CD8-positive, alpha-beta T cell (primary cell): ENCODE measurements at regions of chr14 and their contacts with region 1.

Region 1: DNA sequence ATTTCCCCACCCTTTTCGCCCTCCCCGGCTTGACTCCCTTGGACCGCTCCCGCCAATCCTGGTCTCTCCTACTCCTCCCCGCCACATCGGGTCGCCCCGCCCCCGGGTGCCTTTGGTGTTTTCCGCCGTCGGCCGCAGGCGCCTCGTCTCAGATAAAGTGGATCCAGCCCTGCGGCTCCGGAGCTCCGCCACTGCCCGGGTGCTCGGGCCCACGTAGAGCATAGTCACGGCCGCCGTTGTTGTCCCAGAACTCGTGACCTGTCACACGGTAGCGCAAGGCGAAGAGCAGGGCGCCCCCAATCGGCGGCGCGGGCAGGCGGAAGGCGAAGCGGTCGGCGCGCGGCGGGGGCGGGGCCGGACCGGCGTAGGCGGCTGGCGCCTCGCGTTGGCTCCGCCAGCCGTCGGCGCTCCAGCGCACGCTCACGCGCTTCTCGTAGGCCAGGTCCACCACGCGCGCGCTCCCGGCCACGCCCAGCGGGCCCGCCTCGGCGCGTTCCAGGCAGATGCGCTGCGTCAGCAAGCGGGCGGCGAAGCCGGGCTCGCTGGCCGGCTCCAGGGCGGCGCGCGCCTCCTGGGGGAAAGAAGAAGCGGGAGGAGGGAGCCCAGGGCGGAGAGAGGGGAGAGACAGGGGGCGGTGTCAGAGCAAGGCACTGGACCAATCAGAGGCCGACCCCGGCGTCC is 1.2 kb downstream of the PPP1R3E start:
- DNase-seq: peak; percentile 93 to 99 (median 97)
- ATAC-seq: peak; percentile 74
- H3K4me3 ChIP-seq: peak overlapping the region; percentile 77 to 97
- H3K4me3 Mint-ChIP-seq: peak overlapping the region; percentile 97
- H3K27ac ChIP-seq: peak overlapping the region; percentile 97
- H3K27ac Mint-ChIP-seq: peak overlapping the region; percentile 98
- H3K4me1 ChIP-seq: peaks cover 19% of the 10 kb centered on the region
- H3K4me1 Mint-ChIP-seq: peaks cover 27% of the 10 kb centered on the region
- H3K27me3 ChIP-seq: no peaks in the 10 kb centered on the region
- H3K27me3 Mint-ChIP-seq: peaks cover 14% of the 10 kb centered on the region
- CTCF ChIP-seq: peak; percentile 68

Region 2: DNA sequence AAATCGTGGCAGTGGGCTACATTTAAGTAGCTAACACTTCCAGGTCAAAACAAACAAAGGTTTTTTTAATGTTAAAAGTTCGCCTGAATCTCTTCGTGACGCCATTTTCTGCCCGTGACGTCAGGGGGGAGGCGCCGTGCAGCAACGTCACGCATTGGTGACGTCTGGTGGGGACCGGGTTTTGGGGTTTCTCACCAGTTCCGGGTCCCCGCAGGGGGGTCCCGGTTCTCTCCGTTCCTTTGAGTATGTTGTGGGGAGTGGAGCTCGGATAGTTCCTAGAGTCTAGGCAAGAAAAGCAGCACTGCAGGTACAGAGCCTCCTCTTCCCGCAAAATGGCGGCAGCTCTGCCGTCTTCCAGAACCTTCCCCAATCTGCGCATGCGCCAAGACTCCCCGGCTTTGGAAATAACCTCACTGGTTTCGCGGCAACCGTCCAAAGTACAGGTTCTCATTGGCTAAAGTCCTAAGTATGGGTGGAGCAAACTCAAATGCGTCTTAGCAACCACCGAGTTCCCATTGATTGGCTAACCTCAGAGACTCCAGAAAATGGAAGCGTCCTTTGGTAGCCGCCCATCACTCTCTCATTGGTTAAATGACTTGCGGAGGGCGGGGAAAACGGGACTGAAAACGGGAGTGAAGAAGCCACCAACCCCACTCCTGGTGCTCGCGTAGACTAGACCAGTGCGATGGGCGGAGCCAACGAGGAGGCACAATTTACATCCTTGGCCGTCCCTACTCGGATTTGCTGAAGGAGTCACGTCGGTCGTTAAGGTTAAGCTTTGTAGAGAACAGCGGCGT is 382.4 kb before region 1 on chr14 and contains the start of gene RBM23:
- CTCF ChIA-PET with region 1: no interaction called
- POLR2A ChIA-PET with region 1: no interaction called
- intact Hi-C with region 1: loop called (anchors 1 to 10 kb)
- DNase-seq: peak; percentile 98 to 100 (median 100)
- ATAC-seq: peak; percentile 91
- H3K4me3 ChIP-seq: peak within 1 kb of the TSS; percentile 59 to 88
- H3K4me3 Mint-ChIP-seq: peak within 1 kb of the TSS; percentile 91
- H3K27ac ChIP-seq: peak within 1 kb of the TSS; percentile 100
- H3K27ac Mint-ChIP-seq: peak within 1 kb of the TSS; percentile 99
- H3K4me1 ChIP-seq: peaks cover 30% of the 10 kb centered on the region
- H3K4me1 Mint-ChIP-seq: peaks cover 42% of the 10 kb centered on the region
- H3K27me3 ChIP-seq: no peaks in the 10 kb centered on the region
- H3K27me3 Mint-ChIP-seq: no peaks in the 10 kb centered on the region
- CTCF ChIP-seq: no peak
- total RNA-seq, gene RBM23: 135 to 141 TPM

Region 3: DNA sequence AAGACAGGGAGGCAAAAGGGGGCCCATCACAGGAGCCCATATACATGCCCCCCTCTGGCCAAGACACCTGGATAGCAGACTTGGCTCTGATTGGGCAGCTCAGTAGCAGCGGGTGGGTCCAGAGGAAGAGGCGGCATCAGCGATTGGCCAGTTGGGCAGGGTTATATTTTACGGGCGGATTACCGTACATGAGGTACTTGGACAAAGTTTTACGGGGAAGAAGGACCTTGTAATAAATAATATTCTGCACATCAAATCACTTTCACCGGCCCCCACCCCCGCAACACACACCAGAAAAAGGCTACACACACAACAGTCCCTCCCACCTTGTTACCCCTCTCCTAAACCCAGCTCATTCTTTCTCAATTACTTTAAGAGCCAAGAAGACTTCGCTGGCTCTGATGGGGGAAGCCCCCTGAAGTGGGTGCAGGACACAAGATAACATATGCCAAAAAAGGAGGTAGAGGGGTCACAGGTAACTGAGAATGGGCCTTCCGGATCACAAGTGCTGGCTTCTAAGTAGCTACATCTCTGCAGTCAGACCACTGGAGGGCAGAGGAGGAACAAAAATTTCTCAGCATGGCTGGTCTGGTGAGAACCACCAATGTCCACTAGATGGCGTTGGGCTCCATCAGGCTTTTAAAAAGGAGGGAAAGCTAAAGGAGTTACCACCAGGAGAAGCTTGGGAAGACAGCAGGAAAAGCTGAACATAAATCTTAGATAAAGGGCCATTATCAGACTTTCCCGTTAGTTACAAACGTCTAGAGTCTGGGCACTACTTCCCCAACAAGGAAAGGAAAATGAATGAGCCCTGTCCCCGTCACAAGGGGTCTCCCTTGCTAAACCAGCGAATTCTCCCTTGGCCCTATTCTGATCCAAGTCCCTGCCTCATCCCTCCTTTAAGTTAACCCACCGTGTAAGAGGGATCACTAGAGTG is 232.7 kb before region 1 on chr14:
- CTCF ChIA-PET with region 1: no interaction called
- POLR2A ChIA-PET with region 1: interaction called, 3 read pairs
- intact Hi-C with region 1: loop called in 1 of 2 experiments (anchors 5 kb)
- DNase-seq: peak; percentile 52 to 90 (median 73)
- ATAC-seq: peak; percentile 76
- H3K4me3 ChIP-seq: no peak overlapping the region
- H3K4me3 Mint-ChIP-seq: no peak overlapping the region
- H3K27ac ChIP-seq: no peak overlapping the region
- H3K27ac Mint-ChIP-seq: peak overlapping the region; percentile 39
- H3K4me1 ChIP-seq: peaks cover 28% of the 10 kb centered on the region
- H3K4me1 Mint-ChIP-seq: peaks cover 46% of the 10 kb centered on the region
- H3K27me3 ChIP-seq: no peaks in the 10 kb centered on the region
- H3K27me3 Mint-ChIP-seq: no peaks in the 10 kb centered on the region
- CTCF ChIP-seq: peak; percentile 99

Region 4: DNA sequence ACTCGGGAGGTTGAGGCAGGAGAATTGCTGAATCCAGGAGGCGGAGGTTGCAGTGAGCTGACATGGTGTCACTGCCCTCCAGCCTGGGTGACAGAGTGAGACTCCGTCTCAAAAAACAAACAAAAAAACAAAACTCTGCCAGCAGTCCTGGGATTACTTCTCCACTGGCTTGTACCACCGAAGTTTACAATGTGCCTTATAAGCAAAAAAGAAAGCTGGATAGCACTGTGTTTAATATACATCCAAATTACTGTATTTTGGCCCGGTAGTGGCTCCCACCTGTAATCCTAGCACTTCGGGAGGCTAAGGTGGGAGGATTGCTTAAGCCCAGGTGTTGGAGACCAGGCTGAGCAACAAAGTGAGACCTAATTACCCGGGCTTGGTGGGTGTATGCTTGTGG is 32.2 kb before region 1 on chr14:
- CTCF ChIA-PET with region 1: interaction called, 4 read pairs
- POLR2A ChIA-PET with region 1: interaction called, 4 read pairs
- intact Hi-C with region 1: loop called (anchors 1 kb)
- DNase-seq: no peak
- ATAC-seq: no peak
- H3K4me3 ChIP-seq: no peak overlapping the region
- H3K4me3 Mint-ChIP-seq: no peak overlapping the region
- H3K27ac ChIP-seq: no peak overlapping the region
- H3K27ac Mint-ChIP-seq: no peak overlapping the region
- H3K4me1 ChIP-seq: no peaks in the 10 kb centered on the region
- H3K4me1 Mint-ChIP-seq: no peaks in the 10 kb centered on the region
- H3K27me3 ChIP-seq: peaks cover 0 to 2% of the 10 kb centered on the region in 2 experiments
- H3K27me3 Mint-ChIP-seq: peaks cover 2% of the 10 kb centered on the region
- CTCF ChIP-seq: no peak

Region 5: DNA sequence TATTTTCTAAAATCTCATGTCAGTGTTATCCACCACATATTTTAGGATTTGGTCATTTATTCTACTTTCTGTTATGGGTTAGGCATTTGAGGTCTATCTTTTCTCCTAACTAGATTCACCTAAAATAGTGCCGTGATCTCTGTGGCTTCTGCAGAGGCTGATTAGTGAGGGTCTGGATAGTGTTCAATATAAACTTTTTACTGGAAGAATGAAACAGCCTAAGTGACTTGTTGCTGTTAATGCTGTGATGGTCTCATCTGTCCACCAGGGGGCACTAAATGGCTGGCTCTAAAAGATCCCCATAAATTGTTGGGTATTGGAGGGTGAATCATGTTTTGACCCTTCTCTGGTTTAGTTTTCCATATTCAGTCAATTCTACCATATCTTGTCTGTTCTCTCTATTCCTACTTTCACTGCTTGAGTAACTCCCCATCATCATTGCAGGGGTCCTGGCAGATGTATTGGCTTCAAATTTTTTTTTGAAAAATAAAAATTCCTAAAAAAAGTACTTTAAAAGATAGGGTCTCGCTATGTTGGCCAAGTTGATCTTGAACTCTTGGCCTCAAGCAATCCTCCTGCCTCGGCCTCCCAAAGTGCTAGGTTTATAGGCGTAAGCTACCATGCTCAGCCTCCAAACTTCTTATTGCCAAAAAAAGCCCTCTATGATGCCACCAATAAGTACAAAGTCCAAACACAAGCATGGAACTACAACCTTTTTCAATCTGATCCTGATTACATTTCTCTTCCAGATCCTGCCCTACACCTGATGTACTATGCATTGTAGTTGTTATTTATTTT is 26.7 kb after region 1 on chr14:
- CTCF ChIA-PET with region 1: interaction called, 53 read pairs
- POLR2A ChIA-PET with region 1: interaction called, 202 read pairs
- intact Hi-C with region 1: no loop called
- DNase-seq: peak in 8 of 9 experiments; percentile 43 to 82 (median 71)
- ATAC-seq: peak; percentile 82
- H3K4me3 ChIP-seq: no peak overlapping the region
- H3K4me3 Mint-ChIP-seq: no peak overlapping the region
- H3K27ac ChIP-seq: no peak overlapping the region
- H3K27ac Mint-ChIP-seq: no peak overlapping the region
- H3K4me1 ChIP-seq: peaks cover 2% of the 10 kb centered on the region
- H3K4me1 Mint-ChIP-seq: peaks cover 9% of the 10 kb centered on the region
- H3K27me3 ChIP-seq: no peaks in the 10 kb centered on the region
- H3K27me3 Mint-ChIP-seq: no peaks in the 10 kb centered on the region
- CTCF ChIP-seq: peak; percentile 87

Region 6: GRCh38 chr14:23358553-23359166 is 57.2 kb after region 1 on chr14:
- CTCF ChIA-PET with region 1: no interaction called
- POLR2A ChIA-PET with region 1: no interaction called
- intact Hi-C with region 1: no loop called
- DNase-seq: no peak
- ATAC-seq: no peak
- H3K4me3 ChIP-seq: no peak overlapping the region
- H3K4me3 Mint-ChIP-seq: no peak overlapping the region
- H3K27ac ChIP-seq: no peak overlapping the region
- H3K27ac Mint-ChIP-seq: no peak overlapping the region
- H3K4me1 ChIP-seq: no peaks in the 10 kb centered on the region
- H3K4me1 Mint-ChIP-seq: no peaks in the 10 kb centered on the region
- H3K27me3 ChIP-seq: no peaks in the 10 kb centered on the region
- H3K27me3 Mint-ChIP-seq: peaks cover 14% of the 10 kb centered on the region
- CTCF ChIP-seq: no peak

Region 7: DNA sequence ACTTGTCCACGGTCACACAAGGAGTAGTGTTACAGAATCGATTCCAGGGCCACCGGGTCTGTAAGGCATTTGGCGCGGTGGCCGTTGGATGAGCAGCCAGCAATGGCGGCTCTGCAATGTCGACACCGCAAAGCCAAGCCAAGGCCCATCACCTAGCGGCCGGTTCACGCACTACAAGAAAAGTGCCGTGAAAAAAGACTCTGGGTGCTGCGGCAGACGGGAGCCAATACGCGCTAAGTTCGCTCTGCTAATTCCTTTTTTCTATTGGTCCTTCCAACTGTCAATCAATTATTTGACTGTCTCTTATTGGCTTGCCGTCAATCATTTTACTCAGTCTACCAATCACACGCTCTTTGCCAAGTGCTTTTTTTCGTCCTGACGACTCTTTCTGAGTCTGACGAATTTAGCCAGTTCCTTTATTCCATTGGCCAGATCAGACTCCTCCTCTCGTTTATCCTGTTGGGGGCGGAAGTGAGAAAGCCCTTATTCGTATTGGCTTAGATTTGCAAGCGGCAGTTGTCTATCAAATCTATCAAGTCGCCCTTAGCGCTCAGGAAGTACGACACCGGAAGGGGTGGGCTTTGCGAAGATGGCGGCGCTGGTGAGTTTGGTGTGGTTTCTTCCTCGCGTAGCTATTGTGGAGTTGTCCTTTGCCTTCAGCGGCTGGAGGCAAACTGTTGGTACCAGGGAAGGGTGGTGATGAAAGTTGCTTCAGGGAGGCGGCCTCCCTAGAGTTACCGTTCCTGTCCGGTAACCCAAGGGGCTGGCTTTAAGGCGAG is 167.9 kb after region 1 on chr14 and contains the start of gene NGDN:
- CTCF ChIA-PET with region 1: no interaction called
- POLR2A ChIA-PET with region 1: interaction called, 5 read pairs
- intact Hi-C with region 1: loop called in 1 of 2 experiments (anchors 1 kb)
- DNase-seq: peak; percentile 84 to 99 (median 93)
- ATAC-seq: peak; percentile 89
- H3K4me3 ChIP-seq: peak within 1 kb of the TSS; percentile 71 to 83
- H3K4me3 Mint-ChIP-seq: no peak within 1 kb of the TSS
- H3K27ac ChIP-seq: peak within 1 kb of the TSS; percentile 80 to 93
- H3K27ac Mint-ChIP-seq: peak within 1 kb of the TSS; percentile 6
- H3K4me1 ChIP-seq: peaks cover 16% of the 10 kb centered on the region
- H3K4me1 Mint-ChIP-seq: peaks cover 12% of the 10 kb centered on the region
- H3K27me3 ChIP-seq: no peaks in the 10 kb centered on the region
- H3K27me3 Mint-ChIP-seq: no peaks in the 10 kb centered on the region
- CTCF ChIP-seq: peak; percentile 83
- total RNA-seq, gene NGDN: 173 TPM